ENCODE measurements at regions of chr7 and their contacts with region 1.

Region 1: DNA sequence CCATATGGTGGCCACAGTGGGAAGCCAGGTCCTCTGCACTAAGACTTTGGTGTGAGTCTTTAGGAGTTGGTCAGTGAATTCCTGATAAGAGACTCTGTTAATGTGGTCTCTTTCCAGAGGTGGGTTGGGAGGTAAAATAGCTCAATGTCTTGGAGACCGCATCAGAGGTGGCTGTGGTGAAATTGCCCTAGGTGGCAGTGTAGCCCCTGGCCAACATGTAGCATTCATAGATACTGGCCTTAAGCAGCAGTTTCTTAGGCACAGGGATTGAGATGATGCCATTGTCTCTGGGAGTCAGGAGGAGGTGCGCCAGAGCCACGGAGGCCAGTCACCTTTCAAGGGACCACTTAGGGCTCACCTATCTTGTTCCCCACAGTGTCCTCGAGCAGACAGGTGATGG is 202.8 kb downstream of the CREB5 start:
- DNase-seq: no peak
- H3K4me3 ChIP-seq: no peak overlapping the region
- H3K27ac ChIP-seq: no peak overlapping the region
- H3K4me1 ChIP-seq: peaks cover 43% of the 10 kb centered on the region
- H3K27me3 ChIP-seq: no peaks in the 10 kb centered on the region
- CTCF ChIP-seq: no peak

Region 2: DNA sequence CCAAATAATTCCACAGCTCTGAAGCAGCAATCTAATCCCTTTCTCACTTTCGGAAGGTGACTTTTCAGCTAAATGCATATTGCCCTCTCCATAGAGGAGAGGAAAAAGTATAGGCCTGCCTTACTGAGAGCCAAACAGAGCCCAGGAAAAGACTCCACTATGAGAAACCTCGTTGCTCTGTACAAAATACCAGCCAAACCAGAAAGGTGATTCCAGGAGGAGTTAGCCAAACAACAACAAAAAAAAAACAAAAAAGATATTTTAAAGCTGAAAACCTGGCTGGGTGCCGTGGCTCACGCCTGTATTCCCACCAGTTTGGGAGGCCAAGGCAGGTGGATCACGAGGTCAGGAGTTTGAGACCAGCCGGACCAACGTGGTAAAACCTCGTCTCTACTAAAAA is 1589.8 kb before region 1 on chr7:
- CTCF ChIA-PET with region 1: no interaction called
- POLR2A ChIA-PET with region 1: no interaction called
- intact Hi-C with region 1: no loop called
- DNase-seq: peak; percentile 45 to 52
- H3K4me3 ChIP-seq: no peak overlapping the region
- H3K27ac ChIP-seq: no peak overlapping the region
- H3K4me1 ChIP-seq: peaks cover 10% of the 10 kb centered on the region
- H3K27me3 ChIP-seq: no peaks in the 10 kb centered on the region
- CTCF ChIP-seq: no peak

Region 3: DNA sequence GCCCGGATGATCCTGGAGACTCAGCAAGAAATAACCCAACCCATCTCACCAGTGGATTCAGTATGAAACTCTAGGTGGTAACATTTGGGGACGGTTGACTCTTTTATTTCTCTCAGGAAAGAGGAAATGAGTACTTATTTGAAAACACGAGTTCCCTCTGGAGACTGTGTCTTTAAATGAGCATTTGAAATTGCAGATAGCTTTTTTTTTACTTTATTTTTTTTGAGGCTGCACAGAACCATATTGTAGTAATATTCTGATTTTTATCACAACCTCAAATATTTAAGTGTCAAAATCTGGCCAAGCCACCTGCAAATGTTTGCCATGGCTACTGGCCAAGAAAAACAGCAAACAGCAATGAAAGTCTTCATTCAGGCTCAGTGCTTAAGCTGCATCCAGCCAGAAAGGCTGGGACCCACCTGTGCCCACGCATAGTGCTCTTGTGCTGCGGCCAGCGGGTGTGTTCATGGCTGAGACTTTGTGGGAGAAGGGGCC is 42.0 kb before region 1 on chr7:
- CTCF ChIA-PET with region 1: no interaction called
- POLR2A ChIA-PET with region 1: interaction called, 11 read pairs
- intact Hi-C with region 1: loop called (anchors 1 kb)
- DNase-seq: peak; percentile 49 to 89
- H3K4me3 ChIP-seq: peak overlapping the region; percentile 22; the same call in 1 of the 2 replicates
- H3K27ac ChIP-seq: peak overlapping the region; percentile 53
- H3K4me1 ChIP-seq: peaks cover 59% of the 10 kb centered on the region
- H3K27me3 ChIP-seq: peaks cover 22% of the 10 kb centered on the region; the same call in 1 of the 2 replicates
- CTCF ChIP-seq: no peak

Region 4: GRCh38 chr7:28596245-28596935 is 18.7 kb before region 1 on chr7:
- CTCF ChIA-PET with region 1: no interaction called
- POLR2A ChIA-PET with region 1: no interaction called
- intact Hi-C with region 1: no loop called
- DNase-seq: no peak
- H3K4me3 ChIP-seq: no peak overlapping the region
- H3K27ac ChIP-seq: no peak overlapping the region
- H3K4me1 ChIP-seq: no peaks in the 10 kb centered on the region
- H3K27me3 ChIP-seq: no peaks in the 10 kb centered on the region
- CTCF ChIP-seq: no peak

Region 5: DNA sequence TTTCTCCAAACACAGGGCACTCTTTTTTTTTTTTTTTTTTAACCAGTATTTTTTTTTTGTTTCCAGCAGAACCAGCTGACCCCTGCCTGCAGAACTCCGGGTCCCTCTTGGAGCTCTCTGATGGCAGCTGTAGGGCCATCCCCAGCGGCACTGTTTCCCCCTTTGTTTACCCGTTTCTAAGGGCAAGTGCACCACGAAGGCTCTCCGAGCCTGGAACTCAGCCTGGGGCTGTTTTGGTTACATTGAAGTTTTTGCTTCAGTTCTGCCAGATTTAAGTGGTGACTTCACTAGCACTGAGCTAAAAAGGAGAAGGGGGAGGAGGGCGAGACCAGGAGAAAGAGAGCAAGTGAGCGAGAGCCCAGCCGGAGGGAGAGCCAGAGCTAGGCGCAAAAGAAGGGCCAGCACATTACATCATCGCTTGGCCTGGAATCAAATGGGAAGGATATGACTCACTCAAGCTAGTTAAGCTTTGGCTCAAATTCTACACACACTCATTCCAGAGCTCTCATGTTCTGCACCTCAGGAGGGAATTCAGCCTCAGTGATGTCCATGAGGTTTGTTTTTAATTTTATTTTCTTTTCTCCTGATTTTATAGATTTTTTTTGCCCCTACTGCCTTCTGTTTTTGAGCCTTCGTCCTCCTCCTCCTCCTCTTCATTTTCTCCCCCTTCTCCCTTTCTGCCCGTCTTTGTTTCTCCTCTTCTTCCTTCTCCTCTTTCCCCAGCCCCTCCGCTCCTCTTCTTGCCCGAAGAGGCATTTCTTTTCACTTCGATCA is 70.7 kb after region 1 on chr7:
- CTCF ChIA-PET with region 1: no interaction called
- POLR2A ChIA-PET with region 1: interaction called, 5 read pairs
- intact Hi-C with region 1: loop called (anchors 1 kb)
- DNase-seq: peak; percentile 90 to 97
- H3K4me3 ChIP-seq: peak overlapping the region; percentile 64
- H3K27ac ChIP-seq: peak overlapping the region; percentile 80
- H3K4me1 ChIP-seq: peaks cover 49% of the 10 kb centered on the region
- H3K27me3 ChIP-seq: no peaks in the 10 kb centered on the region
- CTCF ChIP-seq: no peak

Region 6: DNA sequence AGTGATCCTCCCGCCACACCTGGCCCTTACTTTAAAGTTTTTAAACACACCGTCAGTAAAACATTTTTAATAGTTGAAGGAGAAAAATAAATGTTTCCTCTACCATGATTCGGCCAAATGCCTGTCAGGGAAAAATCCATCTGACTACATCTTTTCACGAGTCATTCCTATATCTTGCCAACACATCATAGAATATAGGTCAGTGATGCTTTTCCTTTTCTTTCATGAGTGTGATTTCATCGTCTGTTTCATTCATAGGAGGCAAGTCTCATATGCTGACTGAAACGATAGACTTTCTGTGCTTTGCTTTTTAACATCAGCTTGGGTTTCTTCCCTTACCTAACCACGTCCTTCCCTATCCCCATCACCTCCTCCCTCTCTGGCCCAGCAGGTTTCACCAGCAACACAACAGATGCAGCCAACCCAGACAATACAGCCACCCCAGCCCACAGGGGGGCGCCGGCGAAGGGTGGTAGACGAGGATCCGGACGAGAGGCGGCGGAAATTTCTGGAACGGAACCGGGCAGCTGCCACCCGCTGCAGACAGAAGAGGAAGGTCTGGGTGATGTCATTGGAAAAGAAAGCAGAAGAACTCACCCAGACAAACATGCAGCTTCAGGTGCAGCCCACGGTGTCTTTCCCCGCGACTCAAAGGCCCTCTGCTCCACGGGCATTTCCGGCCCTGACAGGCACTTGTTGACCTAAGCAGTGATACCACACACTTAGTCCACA is 193.9 kb after region 1 on chr7:
- CTCF ChIA-PET with region 1: no interaction called
- POLR2A ChIA-PET with region 1: no interaction called
- intact Hi-C with region 1: no loop called
- DNase-seq: no peak
- H3K4me3 ChIP-seq: no peak overlapping the region
- H3K27ac ChIP-seq: no peak overlapping the region
- H3K4me1 ChIP-seq: 0 out of 2 replicates have a peak, but pooled peaks cover 6% of the 10 kb centered on the region
- H3K27me3 ChIP-seq: no peaks in the 10 kb centered on the region
- CTCF ChIP-seq: no peak

Region 7: GRCh38 chr7:29207162-29207801 is 592.2 kb after region 1 on chr7:
- CTCF ChIA-PET with region 1: no interaction called
- POLR2A ChIA-PET with region 1: no interaction called
- intact Hi-C with region 1: no loop called
- DNase-seq: peak in 1 of 2 experiments; percentile 53
- H3K4me3 ChIP-seq: no peak overlapping the region
- H3K27ac ChIP-seq: no peak overlapping the region
- H3K4me1 ChIP-seq: peaks cover 9% of the 10 kb centered on the region
- H3K27me3 ChIP-seq: 0 out of 2 replicates have a peak, but pooled peaks cover 4% of the 10 kb centered on the region
- CTCF ChIP-seq: no peak

Measured in PC-9 (cell line).